ENCODE measurements at regions of chr17 and their contacts with region 1.

Region 1: GRCh38 chr17:65100316-65101140 is 36.6 kb upstream of the RGS9 start:
- DNase-seq: peak; percentile 47 to 81
- H3K4me3 ChIP-seq: peak overlapping the region; percentile 54
- H3K27ac ChIP-seq: peak overlapping the region; percentile 84
- H3K4me1 ChIP-seq: peaks cover 39% of the 10 kb centered on the region
- H3K27me3 ChIP-seq: no peaks in the 10 kb centered on the region
- CTCF ChIP-seq: peak; percentile 93

Region 2: GRCh38 chr17:64920026-64920418 is 180.5 kb before region 1 on chr17:
- CTCF ChIA-PET with region 1: interaction called, 3 read pairs
- POLR2A ChIA-PET with region 1: no interaction called
- intact Hi-C with region 1: loop called (anchors 10 kb)
- DNase-seq: no peak
- H3K4me3 ChIP-seq: peak overlapping the region; percentile 62
- H3K27ac ChIP-seq: peak overlapping the region; percentile 56; the same call in 1 of the 2 replicates
- H3K4me1 ChIP-seq: peaks cover 8% of the 10 kb centered on the region
- H3K27me3 ChIP-seq: no peaks in the 10 kb centered on the region
- CTCF ChIP-seq: no peak

Region 3: DNA sequence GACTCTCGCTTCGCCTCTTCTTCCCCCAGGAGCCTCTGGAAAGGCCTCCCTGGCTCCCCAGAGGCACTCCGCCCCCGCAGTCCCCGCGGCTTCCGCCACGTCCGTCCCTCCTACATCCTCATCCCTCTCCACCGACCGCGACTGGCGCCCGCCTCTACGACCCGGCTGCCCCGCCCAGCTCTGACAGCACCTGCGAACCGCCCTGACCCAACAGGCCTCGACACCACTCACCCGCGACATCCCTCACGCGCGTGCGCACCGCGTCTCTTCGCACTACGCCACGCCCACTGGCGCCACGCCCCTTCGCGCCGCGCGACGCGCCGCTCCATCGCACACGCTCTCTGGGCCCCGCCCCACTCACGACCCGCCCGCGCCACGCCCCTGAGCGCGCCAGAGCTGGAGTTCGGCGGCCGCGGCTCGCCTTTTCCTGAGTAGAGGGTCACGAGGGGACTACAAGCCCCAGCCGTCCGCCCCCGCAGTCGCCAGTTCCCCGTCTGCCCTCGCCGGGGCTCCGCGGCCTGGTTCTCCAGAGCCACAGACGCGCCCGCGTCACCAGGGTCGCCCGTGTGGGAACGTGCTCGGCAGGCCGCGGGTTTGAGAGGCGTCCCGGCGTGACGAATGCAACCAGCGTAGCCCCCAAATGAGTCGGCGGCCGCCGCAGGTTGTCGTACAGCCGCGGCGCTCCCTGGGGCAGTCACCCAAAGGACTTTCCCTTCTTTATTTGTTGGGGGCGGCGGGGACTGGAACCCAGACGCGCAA is 125.0 kb before region 1 on chr17:
- CTCF ChIA-PET with region 1: no interaction called
- POLR2A ChIA-PET with region 1: interaction called, 4 read pairs
- intact Hi-C with region 1: loop called (anchors 2 kb)
- DNase-seq: peak; percentile 87 to 98
- H3K4me3 ChIP-seq: peak overlapping the region; percentile 70
- H3K27ac ChIP-seq: peak overlapping the region; percentile 87
- H3K4me1 ChIP-seq: peaks cover 22% of the 10 kb centered on the region
- H3K27me3 ChIP-seq: no peaks in the 10 kb centered on the region
- CTCF ChIP-seq: no peak

Region 4: DNA sequence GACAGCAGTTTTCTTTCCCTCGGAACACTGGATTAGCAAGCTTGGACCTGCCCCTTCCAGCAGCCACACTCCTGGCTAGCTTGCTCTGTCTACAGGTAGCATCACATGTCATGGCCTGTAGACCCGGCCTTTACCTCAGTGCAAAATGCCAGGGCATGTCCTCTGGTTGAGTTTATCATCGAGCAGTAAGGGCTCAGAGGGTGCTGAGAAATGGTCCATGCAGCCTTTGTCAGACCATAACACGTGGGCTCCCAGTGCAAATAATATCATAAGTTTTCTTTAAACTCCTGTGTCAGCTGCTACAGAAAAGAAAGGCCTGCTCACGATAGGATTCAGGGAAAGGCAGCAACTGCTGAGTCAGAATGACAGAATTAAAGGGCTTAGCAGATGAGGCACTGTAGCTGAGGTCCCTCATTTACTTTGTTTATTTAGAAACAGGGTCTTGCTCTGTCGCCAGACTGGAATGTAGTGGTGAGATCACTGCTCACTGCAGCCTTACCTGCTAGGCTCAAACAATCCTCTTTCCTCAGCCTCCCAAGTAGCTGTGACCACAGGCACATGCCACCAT is 36.0 kb before region 1 on chr17:
- CTCF ChIA-PET with region 1: interaction called, 7 read pairs
- POLR2A ChIA-PET with region 1: no interaction called
- intact Hi-C with region 1: loop called (anchors 1 kb)
- DNase-seq: peak; percentile 42 to 90
- H3K4me3 ChIP-seq: no peak overlapping the region
- H3K27ac ChIP-seq: peak overlapping the region; percentile 86
- H3K4me1 ChIP-seq: peaks cover 59% of the 10 kb centered on the region
- H3K27me3 ChIP-seq: no peaks in the 10 kb centered on the region
- CTCF ChIP-seq: no peak

Region 5: DNA sequence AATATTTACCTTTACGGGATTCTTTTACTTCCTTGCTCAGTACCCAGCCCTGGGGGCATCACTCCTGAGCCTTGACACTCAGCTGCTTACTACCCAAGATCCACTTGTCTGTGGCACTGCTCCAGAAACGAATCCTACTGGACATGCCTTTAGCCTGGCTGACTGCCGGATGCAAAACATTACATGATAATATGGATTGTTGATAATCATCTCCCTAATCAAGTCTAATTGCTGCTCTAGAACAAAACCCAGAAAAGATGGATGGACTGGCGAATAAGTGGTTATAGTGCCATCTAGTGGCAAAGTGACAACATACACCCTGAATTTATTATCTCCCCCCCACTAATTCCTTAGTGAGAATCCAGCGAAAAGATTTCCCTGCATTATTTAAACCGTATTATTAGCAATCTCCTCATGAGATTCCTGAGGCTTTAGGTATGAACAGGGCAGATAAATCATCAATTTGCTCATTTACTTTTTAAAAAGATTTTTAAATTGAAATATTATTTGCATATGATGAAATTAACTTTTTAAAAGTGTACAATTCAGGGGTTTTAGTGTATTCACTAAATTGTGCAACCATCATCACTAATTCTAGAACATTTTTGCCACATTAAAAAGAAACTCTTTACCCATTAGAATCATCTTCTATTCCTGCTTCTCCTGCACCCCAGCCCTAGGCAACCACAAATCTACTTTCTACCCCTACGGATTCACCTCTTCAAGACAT is 98.3 kb after region 1 on chr17:
- CTCF ChIA-PET with region 1: no interaction called
- POLR2A ChIA-PET with region 1: no interaction called
- intact Hi-C with region 1: loop called (anchors 2 kb)
- DNase-seq: peak; percentile 27 to 47
- H3K4me3 ChIP-seq: no peak overlapping the region
- H3K27ac ChIP-seq: no peak overlapping the region
- H3K4me1 ChIP-seq: no peaks in the 10 kb centered on the region; the same call in 1 of the 2 replicates
- H3K27me3 ChIP-seq: no peaks in the 10 kb centered on the region
- CTCF ChIP-seq: peak; percentile 91